A673 (cell line): ENCODE measurements at regions of chr1 and their contacts with region 1.

Region 1: DNA sequence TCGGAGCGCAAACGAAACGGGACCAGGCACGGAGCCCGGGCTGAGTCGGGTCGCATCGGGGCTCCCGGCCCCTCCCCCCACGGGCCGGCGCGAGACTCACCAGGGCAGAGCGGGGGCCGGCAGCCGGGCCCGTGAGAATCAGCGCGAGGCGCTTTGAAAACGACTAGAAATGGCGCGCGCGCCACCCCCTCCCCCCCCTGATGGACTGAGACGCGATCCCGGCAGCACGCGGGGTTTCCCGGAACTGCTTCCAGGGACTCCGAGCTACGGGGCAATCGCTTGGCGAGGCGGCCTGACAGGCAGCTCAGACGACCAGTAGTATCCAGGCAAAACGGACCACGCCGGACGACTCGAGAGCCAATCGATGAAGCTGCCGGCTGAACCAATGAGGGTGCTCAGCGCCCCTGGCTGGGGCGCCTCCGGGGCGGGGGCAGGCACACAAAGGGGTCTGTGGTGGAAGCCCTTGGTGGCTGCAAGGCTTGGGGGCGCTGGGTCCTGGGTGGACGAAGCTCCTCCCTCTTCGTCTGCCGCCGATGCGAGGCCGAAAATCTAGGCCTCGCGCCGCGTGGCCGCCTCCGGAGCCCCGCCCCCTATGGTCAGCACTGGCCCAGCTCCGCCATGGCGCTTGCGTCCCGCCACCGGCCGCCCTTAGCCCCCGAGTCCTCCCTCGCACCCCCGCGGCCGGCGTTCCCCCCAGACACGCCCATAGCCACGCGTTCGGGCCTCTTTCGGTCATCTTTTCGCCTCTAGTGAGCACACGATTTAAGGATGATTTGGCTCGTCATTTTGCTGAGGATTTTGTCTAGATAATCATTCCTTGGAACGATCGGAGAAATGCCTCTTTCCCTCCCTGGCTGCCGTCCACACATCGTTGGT is at the start of gene HNRNPR:
- DNase-seq: peak; percentile 100
- H3K4me3 ChIP-seq: peak within 1 kb of the TSS; percentile 70
- H3K27ac ChIP-seq: peak within 1 kb of the TSS; percentile 96
- H3K4me1 ChIP-seq: peaks cover 15% of the 10 kb centered on the region
- H3K27me3 ChIP-seq: no peaks in the 10 kb centered on the region
- CTCF ChIP-seq: no peak
- total RNA-seq, gene HNRNPR: 300 and 304 TPM in 2 replicates

Region 2: DNA sequence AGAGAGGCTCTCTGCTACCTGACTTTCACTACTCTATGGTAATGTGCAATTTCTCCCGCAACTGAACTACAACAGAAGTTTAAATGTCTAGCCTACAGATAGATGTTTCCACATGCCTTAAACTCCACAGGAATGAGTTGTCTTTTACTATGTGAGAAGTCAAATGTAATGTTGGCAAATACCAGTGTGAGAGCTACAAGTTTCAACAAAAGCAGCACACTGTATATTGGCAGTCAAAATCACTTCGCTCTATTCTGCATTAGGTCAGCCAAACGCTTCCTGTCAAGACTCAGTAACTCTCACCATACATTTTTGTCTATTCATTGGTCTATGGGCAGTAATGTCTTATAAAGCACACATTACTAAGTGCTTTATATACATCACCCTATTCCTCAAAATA is 217.5 kb before region 1 on chr1:
- CTCF ChIA-PET with region 1: no interaction called
- POLR2A ChIA-PET with region 1: interaction called, 13 read pairs
- intact Hi-C with region 1: no loop called
- DNase-seq: no peak
- H3K4me3 ChIP-seq: no peak overlapping the region
- H3K27ac ChIP-seq: no peak overlapping the region
- H3K4me1 ChIP-seq: peaks cover 34% of the 10 kb centered on the region
- H3K27me3 ChIP-seq: no peaks in the 10 kb centered on the region
- CTCF ChIP-seq: no peak

Region 3: GRCh38 chr1:23303524-23303923 is 40.8 kb before region 1 on chr1:
- CTCF ChIA-PET with region 1: interaction called, 14 read pairs
- POLR2A ChIA-PET with region 1: interaction called, 3 read pairs
- intact Hi-C with region 1: no loop called
- DNase-seq: no peak
- H3K4me3 ChIP-seq: no peak overlapping the region
- H3K27ac ChIP-seq: no peak overlapping the region
- H3K4me1 ChIP-seq: peaks cover 4% of the 10 kb centered on the region
- H3K27me3 ChIP-seq: no peaks in the 10 kb centered on the region
- CTCF ChIP-seq: no peak

Region 4: DNA sequence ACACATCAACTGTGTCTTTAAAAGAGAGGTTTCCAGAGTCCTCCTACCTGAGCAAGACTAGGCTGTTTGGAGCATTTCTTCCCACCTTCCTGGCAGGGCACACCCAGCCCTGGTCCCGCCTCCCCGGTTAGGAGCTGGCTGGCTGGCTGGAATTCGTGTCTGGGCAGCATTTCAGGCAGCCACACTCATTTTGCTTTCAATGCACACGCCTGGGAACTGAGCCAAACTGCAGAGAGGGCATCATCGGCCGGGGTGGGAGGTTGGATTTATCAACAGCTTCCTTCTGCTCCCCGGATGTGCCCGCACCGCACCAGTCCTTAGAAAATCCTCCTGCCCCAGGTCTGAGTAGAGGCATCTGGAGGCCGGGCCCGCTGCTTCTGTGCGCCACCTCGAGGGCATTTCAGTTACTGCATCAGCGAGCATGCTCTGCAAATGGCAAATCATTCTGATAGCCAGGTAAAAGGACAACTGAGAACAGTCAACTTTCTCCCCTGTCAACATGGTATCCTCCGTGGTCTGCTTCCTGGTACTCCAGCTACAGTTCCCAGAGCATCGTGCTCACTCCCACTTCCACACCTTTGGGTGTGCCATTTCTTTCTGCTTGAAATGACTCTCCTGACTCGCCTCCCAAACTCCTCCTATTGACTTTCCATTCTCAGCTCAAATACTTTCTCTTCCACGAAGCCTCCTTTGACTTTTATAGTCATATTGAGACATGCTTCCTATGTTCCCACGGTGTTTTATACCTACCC is 59.6 kb after region 1 on chr1:
- CTCF ChIA-PET with region 1: interaction called, 4 read pairs
- POLR2A ChIA-PET with region 1: interaction called, 14 read pairs
- intact Hi-C with region 1: no loop called
- DNase-seq: peak; percentile 97
- H3K4me3 ChIP-seq: no peak overlapping the region
- H3K27ac ChIP-seq: peak overlapping the region; percentile 7
- H3K4me1 ChIP-seq: peaks cover 27% of the 10 kb centered on the region
- H3K27me3 ChIP-seq: no peaks in the 10 kb centered on the region
- CTCF ChIP-seq: peak; percentile 97

Region 5: GRCh38 chr1:23953020-23953419 is 608.7 kb after region 1 on chr1:
- CTCF ChIA-PET with region 1: no interaction called
- POLR2A ChIA-PET with region 1: interaction called, 13 read pairs
- intact Hi-C with region 1: no loop called
- DNase-seq: no peak
- H3K4me3 ChIP-seq: no peak overlapping the region
- H3K27ac ChIP-seq: no peak overlapping the region
- H3K4me1 ChIP-seq: peaks cover 28% of the 10 kb centered on the region
- H3K27me3 ChIP-seq: no peaks in the 10 kb centered on the region
- CTCF ChIP-seq: no peak